Gastrocnemius medialis (tissue), 4 donors: ENCODE measurements at regions of chr13 and their contacts with region 1.

Region 1: DNA sequence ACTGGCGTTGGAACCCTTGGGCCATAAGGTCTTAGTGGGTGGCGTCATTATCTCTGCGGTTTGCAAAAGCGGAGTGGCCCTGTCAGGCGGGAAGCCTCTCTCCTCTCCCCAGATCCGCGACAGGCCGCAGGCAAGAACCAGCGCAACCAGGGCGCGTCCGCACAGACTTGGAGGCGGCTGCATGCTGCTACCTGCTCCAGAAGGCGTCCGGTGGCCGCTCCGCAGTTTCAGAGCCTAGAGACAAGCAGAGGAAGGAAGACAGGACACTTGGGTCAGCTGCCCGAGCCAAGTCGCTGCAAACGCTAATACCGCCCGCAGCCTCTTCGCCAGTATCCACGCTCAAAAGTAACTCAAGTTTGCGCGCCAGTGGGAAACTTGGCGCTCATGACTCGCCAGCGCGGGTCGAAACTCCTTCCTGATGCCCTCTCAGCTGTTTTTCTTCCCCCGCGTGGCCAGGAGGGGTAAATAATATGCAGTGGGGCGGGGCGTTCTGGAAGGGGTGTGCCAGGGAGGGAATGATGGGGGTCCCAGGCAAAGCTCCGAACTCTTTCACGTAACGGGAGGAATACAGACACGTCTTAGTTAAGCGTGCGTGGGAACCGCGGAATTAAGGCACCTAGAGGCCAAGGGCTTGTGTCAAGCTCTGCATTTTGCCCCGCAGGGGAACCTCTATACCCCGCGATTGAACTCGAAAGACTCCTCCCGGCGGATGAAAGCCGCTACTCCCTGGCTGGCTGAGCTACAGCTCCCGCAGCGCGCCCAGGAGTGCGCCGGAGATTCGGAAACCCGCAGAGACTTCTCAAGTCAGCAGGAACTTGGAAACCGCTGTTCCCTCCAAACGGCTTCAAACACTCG is at the start of gene EDNRB:
- DNase-seq: peak in 1 of 2 donors; percentile 14
- ATAC-seq: peak in 1 of 2 donors; percentile 44
- H3K4me3 ChIP-seq: peak within 1 kb of the TSS; percentile 58 to 75 (median 64)
- H3K27ac ChIP-seq: peak within 1 kb of the TSS; percentile 45 to 76 (median 65)
- H3K4me1 ChIP-seq: no peaks in the 10 kb centered on the region
- H3K27me3 ChIP-seq: peaks cover 2 to 23% (median 7%) of the 10 kb centered on the region in 3 donors
- CTCF ChIP-seq: peak in 2 of 5 experiments; percentile 10 to 30
- POLR2A ChIP-seq: peak in 1 of 2 donors; percentile 18
- total RNA-seq, gene EDNRB: 13.6 to 35.1 (median 20.1) TPM

Region 2: GRCh38 chr13:77637588-77637987 is 281.0 kb before region 1 on chr13:
- in situ Hi-C with region 1: no loop called
- intact Hi-C with region 1: no loop called
- DNase-seq: no peak
- ATAC-seq: no peak
- H3K4me3 ChIP-seq: no peak overlapping the region
- H3K27ac ChIP-seq: no peak overlapping the region
- H3K4me1 ChIP-seq: no peaks in the 10 kb centered on the region
- H3K27me3 ChIP-seq: peaks cover 0 to 2% (median 0%) of the 10 kb centered on the region in 3 donors
- CTCF ChIP-seq: no peak
- POLR2A ChIP-seq: no peak

Region 3: GRCh38 chr13:77861741-77862140 is 56.9 kb before region 1 on chr13:
- in situ Hi-C with region 1: no loop called
- intact Hi-C with region 1: loop called (anchors 1 kb)
- DNase-seq: no peak
- ATAC-seq: no peak
- H3K4me3 ChIP-seq: no peak overlapping the region
- H3K27ac ChIP-seq: no peak overlapping the region
- H3K4me1 ChIP-seq: peaks cover 0 to 7% of the 10 kb centered on the region in 2 donors
- H3K27me3 ChIP-seq: no peaks in the 10 kb centered on the region
- CTCF ChIP-seq: no peak
- POLR2A ChIP-seq: no peak

Region 4: DNA sequence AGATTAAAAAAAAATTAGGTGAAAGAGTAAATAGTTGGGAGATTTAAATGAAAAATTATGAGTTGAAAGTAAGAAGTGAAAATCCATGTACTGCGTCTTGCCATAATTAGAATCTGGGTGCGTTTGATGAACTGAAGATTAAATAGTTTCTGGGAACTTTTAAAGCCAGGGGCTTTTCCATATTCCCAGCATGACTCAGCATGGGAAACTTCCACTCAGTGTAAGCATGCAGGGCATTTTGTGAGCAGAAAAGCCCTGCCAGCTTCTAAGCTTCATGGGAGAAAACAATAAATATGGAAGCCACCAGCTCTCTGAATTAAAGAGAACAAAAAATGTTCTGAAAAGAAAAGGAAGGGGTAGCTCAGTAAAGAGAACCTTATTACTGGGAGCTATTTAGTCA is 62.0 kb after region 1 on chr13:
- in situ Hi-C with region 1: no loop called
- intact Hi-C with region 1: loop called (anchors 10 kb)
- DNase-seq: no peak
- ATAC-seq: peak in 1 of 2 donors; percentile 49
- H3K4me3 ChIP-seq: no peak overlapping the region
- H3K27ac ChIP-seq: peak overlapping the region in 3 of 4 donors; percentile 23 to 53 (median 51)
- H3K4me1 ChIP-seq: peaks cover 0 to 6% of the 10 kb centered on the region in 2 donors
- H3K27me3 ChIP-seq: no peaks in the 10 kb centered on the region
- CTCF ChIP-seq: no peak
- POLR2A ChIP-seq: no peak

Region 5: GRCh38 chr13:78015782-78016181 is 97.2 kb after region 1 on chr13:
- in situ Hi-C with region 1: no loop called
- intact Hi-C with region 1: no loop called
- DNase-seq: no peak
- ATAC-seq: no peak
- H3K4me3 ChIP-seq: no peak overlapping the region
- H3K27ac ChIP-seq: no peak overlapping the region
- H3K4me1 ChIP-seq: no peaks in the 10 kb centered on the region
- H3K27me3 ChIP-seq: no peaks in the 10 kb centered on the region
- CTCF ChIP-seq: no peak
- POLR2A ChIP-seq: no peak

Region 6: GRCh38 chr13:78121459-78122348 is 203.1 kb after region 1 on chr13:
- in situ Hi-C with region 1: no loop called
- intact Hi-C with region 1: no loop called
- DNase-seq: peak; percentile 6 to 18
- ATAC-seq: peak in 1 of 2 donors; percentile 39
- H3K4me3 ChIP-seq: peak overlapping the region in 1 of 4 donors; percentile 3
- H3K27ac ChIP-seq: no peak overlapping the region
- H3K4me1 ChIP-seq: no peaks in the 10 kb centered on the region
- H3K27me3 ChIP-seq: no peaks in the 10 kb centered on the region
- CTCF ChIP-seq: peak; percentile 49 to 73 (median 59)
- POLR2A ChIP-seq: no peak